Left cardiac atrium (tissue), 4 donors: ENCODE measurements at regions of chr4 and their contacts with region 1.

Region 1: DNA sequence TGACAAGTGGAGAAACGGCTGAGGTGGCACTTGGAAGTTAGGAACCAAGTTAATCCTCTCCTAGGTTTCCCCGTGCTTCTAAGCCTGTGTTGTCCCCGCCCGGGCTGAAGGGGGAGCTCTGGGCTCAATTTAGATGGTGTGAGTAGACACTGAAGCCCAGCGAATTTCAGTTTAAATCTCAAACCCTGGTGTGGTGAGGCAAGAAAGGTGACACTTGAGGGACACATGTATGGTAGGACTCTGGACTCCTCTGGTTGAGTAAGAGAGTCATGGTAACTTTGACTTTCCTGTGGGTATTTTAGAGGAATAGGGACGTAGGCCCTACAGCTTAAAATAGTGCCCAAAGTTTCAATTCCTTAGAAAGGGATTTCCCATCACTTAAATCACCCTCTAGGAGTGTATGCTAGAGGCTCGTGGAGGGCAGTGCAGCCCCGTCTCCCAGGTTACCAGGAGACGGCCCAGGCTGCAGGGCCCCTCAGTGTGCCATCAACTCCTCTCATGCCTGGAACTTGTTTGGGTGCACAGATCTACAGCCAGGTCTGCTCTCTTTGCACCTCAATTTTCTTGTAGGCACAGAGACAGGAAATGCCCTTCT is 24.0 kb downstream of the HAND2 start:
- DNase-seq: peak; percentile 70
- ATAC-seq: peak; percentile 33 to 57

Region 2: DNA sequence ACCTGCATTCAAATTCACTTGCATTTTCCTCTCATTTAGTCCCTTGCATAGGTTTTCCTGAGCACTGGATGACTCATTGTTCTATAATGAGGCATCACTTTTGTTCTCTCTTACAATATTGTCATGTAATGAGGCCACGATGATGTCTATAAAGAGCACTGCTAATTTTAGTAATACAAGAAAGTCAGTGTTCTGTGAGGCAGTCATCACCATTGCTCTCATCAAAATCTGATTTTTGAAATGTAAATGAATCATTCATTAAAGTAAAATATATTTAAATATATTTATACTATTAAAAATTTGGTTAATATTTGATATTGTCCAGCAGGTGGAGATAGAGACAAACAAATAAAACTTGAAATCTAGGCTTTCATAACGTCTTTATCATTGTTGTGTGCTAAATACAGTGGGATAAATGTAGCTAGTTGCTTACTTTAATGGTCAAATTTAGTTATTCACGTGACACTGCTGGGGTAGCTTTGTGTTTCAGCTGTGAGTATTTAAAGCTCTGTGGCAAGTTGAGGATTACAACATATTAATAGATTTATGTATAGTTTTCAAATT is 187.3 kb before region 1 on chr4:
- intact Hi-C with region 1: loop called in 1 of 2 experiments (anchors 10 kb)
- DNase-seq: no peak
- ATAC-seq: peak; percentile 27 to 44

Region 3: GRCh38 chr4:173538148-173538908 is 32.3 kb after region 1 on chr4:
- intact Hi-C with region 1: no loop called
- DNase-seq: peak; percentile 58
- ATAC-seq: peak; percentile 79 to 80

Region 4: GRCh38 chr4:173748353-173748752 is 242.3 kb after region 1 on chr4:
- intact Hi-C with region 1: loop called in 1 of 2 experiments (anchors 2 kb)
- DNase-seq: no peak
- ATAC-seq: peak; percentile 38 to 44

Region 5: DNA sequence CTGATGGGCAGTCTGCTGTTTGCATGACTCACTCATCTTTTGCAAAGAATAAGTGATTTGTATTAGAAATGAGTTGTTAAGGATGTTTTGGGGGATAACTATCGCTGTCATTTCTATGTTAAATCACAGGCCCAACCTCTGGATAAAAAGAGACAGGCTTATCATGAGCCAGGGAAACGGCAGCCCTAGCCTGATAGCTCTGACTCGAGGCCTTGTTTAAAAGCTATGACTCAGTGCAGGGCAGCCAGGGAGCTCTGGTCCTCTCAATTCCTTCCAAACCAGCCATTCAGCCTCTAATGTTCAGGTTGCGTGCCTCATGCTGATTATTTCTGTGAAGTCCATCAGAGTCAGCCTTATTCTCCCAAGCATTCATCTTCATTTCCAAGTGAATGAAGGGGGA is 329.9 kb after region 1 on chr4:
- intact Hi-C with region 1: loop called in 1 of 2 experiments (anchors 10 kb)
- DNase-seq: peak; percentile 63
- ATAC-seq: peak; percentile 57 to 98

Region 6: GRCh38 chr4:173990126-173990868 is 484.3 kb after region 1 on chr4:
- intact Hi-C with region 1: loop called (anchors 5 to 10 kb)
- DNase-seq: no peak
- ATAC-seq: peak; percentile 77 to 87

Region 7: DNA sequence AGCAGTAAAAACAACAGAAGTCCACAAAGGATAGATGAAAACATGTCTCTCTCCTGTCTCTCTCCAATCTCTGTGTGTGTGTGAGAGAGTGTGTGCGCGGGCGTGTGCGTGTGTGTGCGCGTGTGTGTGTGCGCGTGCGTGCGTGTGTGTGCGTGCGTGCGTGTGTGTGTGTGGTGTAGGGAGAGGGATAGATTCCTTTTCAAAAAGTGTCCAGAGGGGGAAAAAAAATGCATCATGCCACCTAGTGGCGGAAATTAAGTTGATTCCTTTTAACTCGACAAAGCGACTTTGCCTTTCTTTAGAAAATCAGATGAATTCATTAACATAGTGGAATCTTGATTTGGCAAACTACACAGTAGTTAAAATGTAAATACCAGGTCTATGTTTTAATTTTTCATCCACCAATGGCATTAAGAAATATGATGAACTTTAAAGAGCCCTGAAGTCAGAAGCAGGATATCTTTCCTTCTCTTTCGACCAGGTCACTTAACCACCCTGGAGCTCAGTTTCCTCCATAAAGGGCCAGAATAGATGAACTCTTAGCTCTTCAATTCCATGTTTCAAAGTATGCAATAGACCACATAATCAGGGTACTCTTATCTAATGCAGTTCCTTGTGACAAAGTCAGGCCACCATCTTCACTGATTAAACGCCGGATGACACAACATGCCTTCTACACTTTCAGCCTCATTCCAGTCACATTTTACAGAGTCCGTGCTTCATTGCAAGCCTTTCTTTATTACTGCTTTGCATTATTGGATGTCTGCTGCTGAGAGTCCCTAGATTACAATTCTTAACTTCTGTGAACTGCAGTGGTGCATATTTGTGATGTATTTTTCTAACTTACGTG is 614.6 kb after region 1 on chr4:
- intact Hi-C with region 1: loop called in 1 of 2 experiments (anchors 10 kb)
- DNase-seq: peak; percentile 70
- ATAC-seq: peak; percentile 86 to 94

Region 8: DNA sequence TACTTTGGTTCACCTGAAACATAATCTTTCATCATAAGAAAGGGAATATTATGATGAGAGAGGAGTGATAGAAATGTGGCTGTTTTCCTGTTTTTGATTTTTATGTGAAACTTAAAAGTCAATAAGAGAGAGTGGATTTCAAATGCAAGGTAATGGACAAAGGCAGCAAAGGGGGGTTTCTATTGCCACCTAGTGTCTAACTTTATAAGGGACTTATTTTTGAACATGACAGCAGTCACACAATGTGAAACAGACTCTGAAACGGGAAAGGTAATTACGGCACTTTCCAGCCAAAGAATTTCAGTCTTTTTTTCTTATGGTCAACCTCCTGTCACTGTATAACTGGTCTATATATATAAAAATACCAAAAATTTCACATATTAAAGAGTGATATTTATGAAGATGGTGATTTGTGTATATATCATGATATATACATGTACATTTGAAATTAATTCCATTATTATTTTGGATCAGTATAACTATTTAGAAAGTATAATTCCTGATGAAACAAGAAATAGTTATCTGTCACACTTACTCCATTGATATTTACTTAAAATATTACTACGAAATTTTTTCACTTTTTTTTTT is 650.3 kb after region 1 on chr4:
- intact Hi-C with region 1: loop called (anchors 5 to 10 kb)
- DNase-seq: no peak
- ATAC-seq: peak; percentile 77 to 78